Activated T-helper 2 cell treated with anti-CD3 and anti-CD28 coated beads, Interferon-gamma antibody, Interleukin-2, Interleukin-4, amounts not matched to agents 10 μg/mL and 5 μg/mL and 100 μg/mL, durations not matched to agents 14 hours and 24 hours and 36 hours (primary cell): ENCODE measurements at regions of chr10 and their contacts with region 1.

Region 1: DNA sequence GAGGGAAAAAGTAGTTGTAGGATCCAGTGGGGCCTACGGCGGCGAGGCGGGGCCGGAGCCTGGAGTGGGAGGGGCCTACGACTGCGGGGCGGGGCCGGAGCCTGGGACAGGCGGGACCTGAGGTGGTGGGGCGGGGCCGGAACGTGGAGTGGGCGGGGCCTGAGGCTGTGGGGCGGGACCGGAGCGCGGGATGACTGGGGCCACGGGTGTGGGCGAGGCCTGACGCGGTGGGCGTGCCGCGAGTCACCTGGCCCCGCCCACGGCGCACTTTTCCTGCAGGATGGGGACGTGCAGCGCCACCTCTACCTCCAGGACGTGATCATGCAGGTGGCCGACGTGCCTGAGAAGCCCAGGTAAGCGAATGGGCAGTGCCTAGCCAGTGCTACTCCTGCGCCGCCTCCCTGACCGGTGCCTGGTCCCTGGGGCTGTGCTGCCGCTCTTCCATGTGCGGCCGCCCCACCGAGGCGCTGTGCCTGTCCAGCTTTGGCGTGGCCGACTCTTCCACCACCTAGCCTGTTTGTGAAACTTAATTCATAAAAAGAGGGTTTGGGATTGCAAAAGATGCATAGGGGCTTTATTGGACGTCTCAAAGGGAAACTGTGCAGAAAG is 501 bp downstream of the ZNF511 start:
- DNase-seq: peak; percentile 87
- H3K4me3 Mint-ChIP-seq: peak overlapping the region; percentile 63
- H3K27ac Mint-ChIP-seq: peak overlapping the region; percentile 76
- H3K4me1 Mint-ChIP-seq: peaks cover 16% of the 10 kb centered on the region
- H3K27me3 Mint-ChIP-seq: no peaks in the 10 kb centered on the region

Region 2: GRCh38 chr10:133261726-133262325 is 47.4 kb before region 1 on chr10:
- intact Hi-C with region 1: loop called (anchors 1 kb)
- DNase-seq: peak; percentile 79
- H3K4me3 Mint-ChIP-seq: peak overlapping the region; percentile 79
- H3K27ac Mint-ChIP-seq: no peak overlapping the region
- H3K4me1 Mint-ChIP-seq: peaks cover 53% of the 10 kb centered on the region
- H3K27me3 Mint-ChIP-seq: no peaks in the 10 kb centered on the region

Region 3: GRCh38 chr10:133276435-133277201 is 32.6 kb before region 1 on chr10 and contains the start of gene ADAM8:
- intact Hi-C with region 1: loop called (anchors 1 kb)
- DNase-seq: peak; percentile 66
- H3K4me3 Mint-ChIP-seq: peak within 1 kb of the TSS; percentile 91
- H3K27ac Mint-ChIP-seq: peak within 1 kb of the TSS; percentile 84
- H3K4me1 Mint-ChIP-seq: peaks cover 18% of the 10 kb centered on the region
- H3K27me3 Mint-ChIP-seq: no peaks in the 10 kb centered on the region
- total RNA-seq, gene ADAM8: 214 and 220 TPM in 2 replicates

Region 4: GRCh38 chr10:133346413-133346812 is 37.2 kb after region 1 on chr10:
- intact Hi-C with region 1: no loop called
- DNase-seq: no peak
- H3K4me3 Mint-ChIP-seq: no peak overlapping the region
- H3K27ac Mint-ChIP-seq: no peak overlapping the region
- H3K4me1 Mint-ChIP-seq: peaks cover 2% of the 10 kb centered on the region
- H3K27me3 Mint-ChIP-seq: peaks cover 7% of the 10 kb centered on the region

Region 5: GRCh38 chr10:133357285-133358151 is 48.3 kb after region 1 on chr10 and contains the start of gene FUOM:
- intact Hi-C with region 1: loop called (anchors 5 kb)
- DNase-seq: peak; percentile 66
- H3K4me3 Mint-ChIP-seq: peak within 1 kb of the TSS; percentile 78
- H3K27ac Mint-ChIP-seq: peak within 1 kb of the TSS; percentile 60
- H3K4me1 Mint-ChIP-seq: peaks cover 6% of the 10 kb centered on the region
- H3K27me3 Mint-ChIP-seq: no peaks in the 10 kb centered on the region
- total RNA-seq, gene FUOM: 44.0 and 45.7 TPM in 2 replicates

Region 6: DNA sequence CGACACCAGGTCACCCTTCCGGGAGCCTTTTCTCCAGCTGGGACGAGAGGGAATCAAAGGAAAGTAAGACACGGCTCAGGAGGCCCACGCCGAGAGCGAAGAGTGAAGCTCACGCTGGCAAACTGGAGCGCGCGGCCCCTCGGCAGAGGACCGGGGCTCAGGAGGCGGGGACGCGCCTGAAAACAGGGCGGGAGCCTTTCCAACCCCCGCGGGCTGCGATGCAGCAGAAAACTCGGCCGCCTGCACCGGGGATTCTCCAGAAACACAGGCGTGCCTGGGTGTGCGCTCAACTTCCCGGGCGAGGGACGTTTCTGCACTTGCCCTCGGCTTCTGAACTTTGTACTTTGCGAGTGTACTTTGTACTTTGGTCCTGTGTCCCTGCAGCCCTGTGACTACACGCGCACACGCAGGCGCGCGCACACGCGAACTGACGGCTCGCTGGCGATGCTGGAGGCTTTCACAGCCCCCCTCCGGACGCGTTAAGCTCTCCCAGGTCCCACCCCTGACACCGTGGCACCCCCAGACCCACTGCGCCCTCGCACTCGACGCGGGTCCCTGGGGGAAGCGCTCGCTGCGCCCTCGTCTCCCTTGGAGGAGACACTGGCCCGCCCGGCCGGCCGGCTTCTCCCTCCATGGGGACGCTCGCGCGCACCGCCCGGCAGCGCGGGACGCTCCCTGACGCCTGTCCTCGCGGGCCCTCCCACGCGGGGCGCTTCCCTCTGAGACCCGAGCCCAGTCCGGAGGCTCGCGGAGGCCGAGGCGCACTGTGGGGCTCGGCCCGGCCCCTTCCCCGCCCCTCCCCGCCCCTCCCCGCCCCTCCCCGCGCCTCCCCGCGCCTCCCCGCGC is 69.3 kb after region 1 on chr10:
- intact Hi-C with region 1: loop called (anchors 2 kb)
- DNase-seq: peak; percentile 58
- H3K4me3 Mint-ChIP-seq: peak overlapping the region; percentile 69
- H3K27ac Mint-ChIP-seq: no peak overlapping the region
- H3K4me1 Mint-ChIP-seq: peaks cover 9% of the 10 kb centered on the region
- H3K27me3 Mint-ChIP-seq: peaks cover 5% of the 10 kb centered on the region